Common myeloid progenitor, CD34-positive (primary cell): ENCODE measurements at regions of chr11 and their contacts with region 1.

Region 1: GRCh38 chr11:65833297-65834030 is at the start of gene SNX32:
- DNase-seq: peak; percentile 90 to 95 (median 94)
- H3K4me3 ChIP-seq: peak within 1 kb of the TSS; percentile 33 to 87 (median 74)
- H3K27ac ChIP-seq: peak within 1 kb of the TSS; percentile 61 to 84
- H3K4me1 ChIP-seq: peaks cover 5 to 21% (median 20%) of the 10 kb centered on the region in 4 experiments
- H3K27me3 ChIP-seq: peaks cover 0 to 2% (median 0%) of the 10 kb centered on the region in 5 experiments

Region 2: GRCh38 chr11:65810046-65810868 is 23.2 kb before region 1 on chr11:
- CTCF ChIA-PET with region 1: no interaction called
- POLR2A ChIA-PET with region 1: no interaction called
- DNase-seq: peak in 2 of 3 donors; percentile 40 to 51
- H3K4me3 ChIP-seq: no peak overlapping the region
- H3K27ac ChIP-seq: no peak overlapping the region
- H3K4me1 ChIP-seq: no peaks in the 10 kb centered on the region
- H3K27me3 ChIP-seq: peaks cover 0 to 4% (median 0%) of the 10 kb centered on the region in 5 experiments

Region 3: DNA sequence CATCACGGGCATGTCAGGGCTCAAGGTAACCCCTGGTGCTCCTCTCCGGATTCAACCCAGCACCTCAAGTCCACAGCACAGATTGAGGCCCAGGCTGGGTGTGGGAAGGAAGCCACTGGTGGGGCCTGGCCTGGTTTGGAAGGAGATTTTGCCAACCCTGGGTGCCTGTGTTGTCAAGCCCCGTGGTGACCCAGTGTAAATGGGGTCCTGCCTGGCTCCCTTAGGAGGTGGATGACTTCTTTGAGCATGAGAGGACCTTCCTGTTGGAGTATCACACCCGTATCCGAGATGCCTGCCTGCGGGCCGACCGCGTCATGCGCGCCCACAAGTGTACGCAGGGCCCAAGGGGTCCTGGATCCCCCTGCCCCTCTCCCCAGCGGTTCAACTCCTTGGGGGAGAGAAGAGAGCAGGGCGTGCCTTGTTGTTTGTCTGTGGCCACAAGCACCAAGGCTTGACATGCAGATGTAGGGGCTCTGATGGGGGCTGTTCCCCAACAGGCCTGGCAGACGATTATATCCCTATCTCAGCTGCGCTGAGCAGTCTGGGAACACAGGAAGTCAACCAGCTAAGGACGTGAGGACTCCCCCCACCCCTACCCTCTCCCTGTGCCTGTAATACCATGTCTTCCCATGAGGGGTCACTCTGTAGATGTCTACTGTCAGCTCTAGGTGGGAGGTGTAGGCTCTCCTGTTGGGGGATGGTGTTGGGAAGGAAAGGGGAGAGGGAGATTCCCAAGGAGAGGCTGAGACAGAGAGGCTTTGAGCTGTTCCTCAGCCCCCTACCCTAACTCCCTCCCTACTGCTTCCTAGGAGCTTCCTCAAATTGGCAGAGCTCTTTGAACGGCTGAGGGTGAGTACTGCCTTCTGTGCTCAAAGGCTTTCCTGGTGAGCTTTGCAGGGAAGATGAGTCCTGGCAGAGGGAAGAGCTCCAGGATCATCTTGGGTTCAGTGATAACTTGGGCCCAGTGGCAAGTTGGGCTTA is 17.7 kb after region 1 on chr11:
- CTCF ChIA-PET with region 1: interaction called, 13 read pairs
- POLR2A ChIA-PET with region 1: interaction called, 6 read pairs
- DNase-seq: peak in 1 of 3 donors; percentile 34
- H3K4me3 ChIP-seq: no peak overlapping the region
- H3K27ac ChIP-seq: no peak overlapping the region
- H3K4me1 ChIP-seq: peaks cover 0 to 9% (median 8%) of the 10 kb centered on the region in 4 experiments
- H3K27me3 ChIP-seq: no peaks in the 10 kb centered on the region